ENCODE measurements at regions of chr17 and their contacts with region 1.

Region 1: DNA sequence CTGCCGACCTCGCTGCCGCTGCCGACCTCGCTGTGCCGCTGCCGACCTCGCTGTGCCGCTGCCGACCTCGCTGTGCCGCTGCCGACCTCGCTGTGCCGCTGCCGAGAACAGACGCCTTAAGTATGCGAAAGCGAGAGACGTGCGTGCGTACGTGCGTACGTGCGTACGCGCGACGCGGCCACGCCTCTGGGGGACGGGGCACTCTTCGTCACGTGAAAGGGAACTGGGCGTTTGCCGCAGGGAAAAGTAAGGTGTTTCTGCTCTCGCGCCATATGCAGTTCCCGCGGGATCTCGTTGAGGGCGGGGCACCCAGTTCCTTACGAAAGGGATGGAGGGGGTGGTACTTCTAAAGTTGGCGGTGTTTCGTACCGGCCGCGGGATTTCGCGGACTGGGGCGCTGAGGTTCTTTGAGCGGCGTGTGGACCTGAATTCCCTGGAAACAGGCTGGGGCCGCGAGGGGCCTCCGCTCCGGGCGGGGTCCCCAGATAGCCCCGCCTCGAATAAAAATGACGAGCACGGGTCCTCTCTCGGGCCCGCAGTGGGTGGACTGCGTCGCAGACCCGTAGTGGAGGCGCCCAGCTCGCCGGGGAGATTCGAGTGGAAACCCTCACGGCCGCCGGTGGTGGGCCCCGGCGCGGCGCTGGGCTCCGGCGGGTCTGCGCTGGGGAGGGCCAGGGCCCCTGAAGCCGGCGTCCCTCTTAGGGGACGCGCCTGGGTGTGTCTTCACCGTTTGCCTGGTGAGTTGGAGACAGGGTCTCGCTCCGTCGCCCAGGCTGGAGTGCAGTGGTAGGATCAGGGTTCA is at the start of gene EIF4A3:
- DNase-seq: peak; percentile 99
- ATAC-seq: peak; percentile 88
- H3K4me3 ChIP-seq: peak within 1 kb of the TSS; percentile 87
- H3K27ac ChIP-seq: peak within 1 kb of the TSS; percentile 88
- H3K4me1 ChIP-seq: peaks cover 15% of the 10 kb centered on the region
- H3K27me3 ChIP-seq: no peaks in the 10 kb centered on the region
- CTCF ChIP-seq: no peak
- POLR2A ChIP-seq: peak; percentile 91
- RAD21 ChIP-seq: no peak
- total RNA-seq, gene EIF4A3: 97.1 and 110 TPM in 2 replicates

Region 2: GRCh38 chr17:80101011-80101945 is 46.0 kb before region 1 on chr17 and contains the start of gene GAA:
- CTCF ChIA-PET with region 1: interaction called, 9 read pairs
- POLR2A ChIA-PET with region 1: interaction called, 3 read pairs
- dilution Hi-C with region 1: no loop called
- in situ Hi-C with region 1: no loop called
- intact Hi-C with region 1: loop called (anchors 5 kb)
- DNase-seq: peak; percentile 76
- ATAC-seq: peak; percentile 92
- H3K4me3 ChIP-seq: peak within 1 kb of the TSS; percentile 98
- H3K27ac ChIP-seq: peak within 1 kb of the TSS; percentile 76
- H3K4me1 ChIP-seq: peaks cover 6% of the 10 kb centered on the region
- H3K27me3 ChIP-seq: no peaks in the 10 kb centered on the region
- CTCF ChIP-seq: peak; percentile 91
- POLR2A ChIP-seq: peak; percentile 50; the same call in 1 of the 2 replicates
- RAD21 ChIP-seq: peak; percentile 42; the same call in 1 of the 2 replicates
- total RNA-seq, gene GAA: 2.2 and 3.3 TPM in 2 replicates

Region 3: GRCh38 chr17:80219013-80219762 is 72.0 kb after region 1 on chr17:
- CTCF ChIA-PET with region 1: no interaction called
- POLR2A ChIA-PET with region 1: interaction called, 7 read pairs
- dilution Hi-C with region 1: no loop called
- in situ Hi-C with region 1: no loop called
- intact Hi-C with region 1: loop called (anchors 1 kb)
- DNase-seq: peak; percentile 80
- ATAC-seq: peak; percentile 18
- H3K4me3 ChIP-seq: peak overlapping the region; percentile 67
- H3K27ac ChIP-seq: peak overlapping the region; percentile 67
- H3K4me1 ChIP-seq: peaks cover 6% of the 10 kb centered on the region; the same call in 1 of the 2 replicates
- H3K27me3 ChIP-seq: no peaks in the 10 kb centered on the region
- CTCF ChIP-seq: no peak
- POLR2A ChIP-seq: no peak
- RAD21 ChIP-seq: no peak

Measured in IMR-90 (cell line).